ENCODE measurements at regions of chr2 and their contacts with region 1.

Region 1: DNA sequence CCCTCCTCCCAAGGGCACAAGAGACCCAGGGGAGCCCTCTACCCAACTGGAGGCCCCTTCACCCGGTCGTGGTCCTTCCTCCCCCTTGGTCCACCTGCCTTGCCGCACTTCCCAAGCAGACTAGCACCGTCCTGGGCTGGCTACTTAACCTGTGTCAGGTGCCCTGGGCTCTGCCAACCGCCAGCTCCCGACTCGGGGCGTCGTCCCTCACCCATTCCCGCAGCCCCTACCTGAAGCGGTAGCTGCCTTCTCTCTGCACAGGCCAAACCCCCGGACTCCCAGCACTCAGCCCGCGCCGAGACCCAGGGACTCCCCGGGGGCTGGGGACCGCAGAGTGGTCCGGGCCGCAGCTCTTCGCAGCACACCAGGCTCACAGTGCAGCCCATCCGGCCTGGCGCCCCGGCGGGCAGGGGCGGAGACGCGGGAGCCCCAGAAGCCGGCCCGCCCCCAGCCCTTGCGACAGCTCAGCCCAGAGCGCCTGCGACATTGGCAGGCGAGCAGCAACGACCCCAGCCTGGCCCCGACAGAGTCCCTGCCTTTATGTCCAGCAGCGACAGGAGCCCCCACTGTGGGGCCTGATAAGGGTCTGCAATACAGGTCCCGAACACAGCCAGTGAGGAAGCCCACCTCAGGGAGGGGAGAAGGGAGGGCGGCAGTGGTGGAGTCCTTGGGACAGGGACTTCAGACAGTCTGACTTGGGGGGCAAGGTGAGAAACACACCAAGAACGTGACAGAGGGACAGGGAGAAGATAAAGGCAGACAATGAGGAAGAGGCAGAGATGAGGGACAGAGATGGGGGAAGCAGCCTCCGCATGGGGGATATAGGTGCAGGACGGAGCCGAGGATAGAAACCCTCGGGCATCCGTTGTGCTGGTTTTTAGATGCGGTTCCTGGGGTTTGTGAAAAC is 31.0 kb upstream of the TNS1 start:
- DNase-seq: peak in 1 of 2 donors; percentile 78
- ATAC-seq: no peak
- H3K4me3 ChIP-seq: no peak overlapping the region
- H3K27ac ChIP-seq: no peak overlapping the region
- H3K4me1 ChIP-seq: no peaks in the 10 kb centered on the region
- H3K27me3 ChIP-seq: no peaks in the 10 kb centered on the region

Region 2: DNA sequence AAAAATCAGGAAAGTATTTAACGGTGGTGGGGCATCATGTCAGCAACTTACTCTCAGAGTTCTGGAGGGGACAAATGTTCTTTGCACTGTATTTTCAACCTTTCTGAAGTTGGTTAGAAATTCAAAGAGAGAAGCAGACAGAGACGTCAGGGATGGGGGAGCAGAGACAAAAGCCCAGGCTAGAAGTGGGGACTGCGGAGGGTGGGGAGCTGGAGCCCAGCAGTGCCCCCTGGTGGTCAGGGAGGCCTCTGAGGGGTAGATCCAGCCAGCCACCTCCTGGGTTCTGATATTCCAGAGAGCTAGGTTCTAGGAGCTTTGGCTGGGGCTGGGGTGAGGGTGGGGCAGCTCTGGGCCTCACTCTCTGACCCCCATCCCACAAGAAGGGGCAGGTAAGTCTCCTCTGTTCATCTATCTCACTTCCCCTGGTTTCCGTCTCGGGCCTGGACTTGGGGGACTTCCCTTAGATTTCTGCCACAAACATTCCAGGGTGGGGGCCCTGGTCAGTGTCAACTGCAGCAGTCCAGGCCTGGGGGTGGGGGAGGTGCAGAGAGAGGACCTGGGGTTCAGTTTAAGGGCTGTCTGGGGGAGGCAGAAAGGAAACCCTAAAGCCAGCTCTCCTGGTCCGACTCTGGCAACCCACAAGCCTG is 39.9 kb before region 1 on chr2:
- intact Hi-C with region 1: loop called in 1 of 2 experiments (anchors 5 kb)
- DNase-seq: peak; percentile 74 to 90
- ATAC-seq: peak; percentile 71
- H3K4me3 ChIP-seq: no peak overlapping the region
- H3K27ac ChIP-seq: no peak overlapping the region
- H3K4me1 ChIP-seq: peaks cover 0 to 2% of the 10 kb centered on the region in 2 donors
- H3K27me3 ChIP-seq: no peaks in the 10 kb centered on the region

Region 3: DNA sequence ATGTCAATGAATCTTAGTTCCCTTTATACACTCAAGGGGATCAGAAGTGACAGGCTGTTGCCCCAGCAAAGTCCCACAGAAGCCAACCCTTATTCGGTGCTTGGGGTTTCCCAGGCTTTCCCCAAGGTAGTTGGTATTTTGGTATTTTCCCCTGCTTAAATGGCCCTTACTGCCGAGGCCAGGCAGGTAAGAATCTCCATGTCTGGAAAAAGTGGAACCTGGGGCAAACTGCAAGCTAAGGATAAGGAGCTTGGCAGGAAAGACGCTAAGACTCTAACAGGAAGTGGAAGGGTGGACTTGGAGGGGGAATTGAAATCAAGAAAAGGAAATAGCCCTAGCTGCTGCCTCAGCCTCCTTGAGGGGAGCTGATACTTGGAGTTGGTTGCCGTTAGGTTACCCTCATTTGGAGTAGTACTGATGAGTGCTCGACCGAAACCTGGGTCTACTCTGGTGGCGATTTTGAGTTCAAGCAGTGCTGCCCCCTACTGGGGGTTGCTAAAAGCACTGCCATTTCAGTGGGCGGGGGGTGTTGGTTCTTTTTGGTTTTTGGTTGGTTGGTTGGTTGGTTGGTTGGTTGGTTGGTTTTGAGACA is 223.6 kb after region 1 on chr2:
- intact Hi-C with region 1: no loop called
- DNase-seq: peak in 1 of 2 donors; percentile 67
- ATAC-seq: peak; percentile 33
- H3K4me3 ChIP-seq: no peak overlapping the region
- H3K27ac ChIP-seq: no peak overlapping the region
- H3K4me1 ChIP-seq: no peaks in the 10 kb centered on the region
- H3K27me3 ChIP-seq: no peaks in the 10 kb centered on the region